ENCODE measurements at regions of chr7 and their contacts with region 1.

Region 1: DNA sequence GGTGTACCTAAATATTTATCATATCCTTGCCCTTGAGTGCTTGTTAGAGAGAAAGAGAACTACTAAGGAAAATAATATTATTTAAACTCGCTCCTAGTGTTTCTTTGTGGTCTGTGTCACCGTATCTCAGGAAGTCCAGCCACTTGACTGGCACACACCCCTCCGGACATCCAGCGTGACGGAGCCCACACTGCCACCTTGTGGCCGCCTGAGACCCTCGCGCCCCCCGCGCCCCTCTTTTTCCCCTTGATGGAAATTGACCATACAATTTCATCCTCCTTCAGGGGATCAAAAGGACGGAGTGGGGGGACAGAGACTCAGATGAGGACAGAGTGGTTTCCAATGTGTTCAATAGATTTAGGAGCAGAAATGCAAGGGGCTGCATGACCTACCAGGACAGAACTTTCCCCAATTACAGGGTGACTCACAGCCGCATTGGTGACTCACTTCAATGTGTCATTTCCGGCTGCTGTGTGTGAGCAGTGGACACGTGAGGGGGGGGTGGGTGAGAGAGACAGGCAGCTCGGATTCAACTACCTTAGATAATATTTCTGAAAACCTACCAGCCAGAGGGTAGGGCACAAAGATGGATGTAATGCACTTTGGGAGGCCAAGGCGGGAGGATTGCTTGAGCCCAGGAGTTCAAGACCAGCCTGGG is 11.4 kb downstream of the SERPINE1 start:
- DNase-seq: peak; percentile 96 to 99 (median 98)
- H3K4me3 ChIP-seq: peak overlapping the region in 2 of 3 experiments; percentile 17 to 44
- H3K4me3 Mint-ChIP-seq: peak overlapping the region; percentile 51 to 83
- H3K27ac ChIP-seq: peak overlapping the region; percentile 71 to 96
- H3K27ac Mint-ChIP-seq: peak overlapping the region; percentile 90 to 97 (median 93)
- H3K4me1 ChIP-seq: peaks cover 28 to 42% of the 10 kb centered on the region in 2 donors
- H3K4me1 Mint-ChIP-seq: peaks cover 52% of the 10 kb centered on the region
- H3K27me3 ChIP-seq: peaks cover 0 to 4% of the 10 kb centered on the region in 2 donors
- H3K27me3 Mint-ChIP-seq: peaks cover 11 to 37% (median 29%) of the 10 kb centered on the region in 3 donors
- CTCF ChIP-seq: peak; percentile 98

Region 2: DNA sequence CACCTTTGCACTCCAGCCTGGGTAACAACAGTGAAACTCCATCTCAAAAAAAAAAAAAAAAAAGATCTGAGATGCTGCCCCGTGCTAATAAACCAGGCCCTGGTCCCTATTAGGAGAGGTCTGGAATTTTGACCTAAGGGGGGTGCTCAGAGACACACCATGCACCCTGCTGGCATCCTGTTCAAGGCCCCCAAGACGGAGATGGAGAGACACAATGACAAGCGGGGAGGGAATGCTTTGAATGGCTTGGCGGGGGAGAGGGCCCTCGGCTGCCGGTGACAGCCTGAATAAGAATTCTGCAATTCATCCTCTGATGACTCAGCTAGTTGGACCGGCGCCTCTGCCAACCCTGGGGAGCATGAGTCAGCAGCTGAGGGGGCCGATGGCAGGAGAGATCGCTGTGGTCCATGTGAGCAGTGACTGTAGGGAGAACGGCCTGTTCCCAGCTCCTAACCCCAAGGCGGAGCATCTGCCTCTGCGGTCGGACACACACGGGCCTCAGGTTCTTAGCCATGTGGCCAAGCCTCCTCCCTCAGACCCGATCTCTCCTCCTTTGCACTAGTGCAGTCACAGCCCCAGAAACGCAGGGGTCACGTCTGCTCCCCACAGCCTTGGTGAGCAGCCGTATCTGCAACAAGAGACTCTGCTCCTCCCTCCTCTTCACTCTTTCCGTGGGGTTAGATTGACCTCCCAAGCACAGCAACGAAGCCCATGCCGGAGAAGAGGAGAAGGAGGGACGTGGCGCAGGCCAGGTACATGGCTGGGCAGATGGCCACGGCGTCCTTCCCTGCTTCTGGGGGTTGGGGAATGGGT is 38.2 kb before region 1 on chr7:
- intact Hi-C with region 1: loop called (anchors 5 kb)
- DNase-seq: peak; percentile 84 to 93 (median 88)
- H3K4me3 ChIP-seq: peak overlapping the region in 1 of 3 experiments; percentile 15
- H3K4me3 Mint-ChIP-seq: peak overlapping the region in 1 of 2 donors; percentile 67
- H3K27ac ChIP-seq: no peak overlapping the region
- H3K27ac Mint-ChIP-seq: peak overlapping the region in 4 of 7 donors; percentile 51 to 70 (median 62)
- H3K4me1 ChIP-seq: peaks cover 12% of the 10 kb centered on the region in 2 donors
- H3K4me1 Mint-ChIP-seq: peaks cover 16% of the 10 kb centered on the region
- H3K27me3 ChIP-seq: peaks cover 2 to 16% of the 10 kb centered on the region in 2 donors
- H3K27me3 Mint-ChIP-seq: peaks cover 14 to 37% (median 18%) of the 10 kb centered on the region in 3 donors
- CTCF ChIP-seq: no peak

Region 3: DNA sequence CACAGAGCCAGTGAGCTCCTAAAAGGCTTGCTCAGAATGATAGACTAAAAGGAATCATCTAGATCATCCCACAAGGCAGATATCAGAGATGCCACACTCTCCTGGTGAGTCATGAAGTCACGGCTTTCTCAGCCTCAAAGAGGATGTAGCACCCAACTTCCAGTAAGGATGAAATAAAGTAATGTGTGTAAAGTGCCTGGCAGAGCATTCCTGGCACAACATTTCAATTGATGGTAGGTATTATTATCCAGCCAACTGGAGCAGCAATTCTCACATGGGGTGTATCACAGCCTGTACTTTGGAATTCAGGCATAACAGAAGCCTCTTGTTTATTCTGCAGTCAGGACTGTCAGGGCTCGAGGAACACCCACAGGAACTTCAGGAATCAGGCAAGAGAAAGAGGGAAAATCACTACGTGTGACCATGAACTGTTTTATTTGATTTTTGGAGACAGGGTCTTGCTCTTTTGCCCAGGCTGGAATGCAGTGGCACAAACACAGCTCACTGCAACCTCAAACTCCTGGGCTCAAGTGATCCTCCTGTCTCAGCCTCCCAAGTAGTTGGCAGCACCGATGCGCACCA is 47.0 kb after region 1 on chr7:
- intact Hi-C with region 1: loop called in 1 of 2 experiments (anchors 5 kb)
- DNase-seq: peak in 1 of 3 donors; percentile 49
- H3K4me3 ChIP-seq: no peak overlapping the region
- H3K4me3 Mint-ChIP-seq: peak overlapping the region in 1 of 2 donors; percentile 44
- H3K27ac ChIP-seq: no peak overlapping the region
- H3K27ac Mint-ChIP-seq: no peak overlapping the region
- H3K4me1 ChIP-seq: peaks cover 12 to 14% of the 10 kb centered on the region in 2 donors
- H3K4me1 Mint-ChIP-seq: peaks cover 17% of the 10 kb centered on the region
- H3K27me3 ChIP-seq: peaks cover 11 to 27% of the 10 kb centered on the region in 2 donors
- H3K27me3 Mint-ChIP-seq: peaks cover 31 to 47% (median 33%) of the 10 kb centered on the region in 3 donors
- CTCF ChIP-seq: no peak

Region 4: GRCh38 chr7:101244375-101245146 is 106.2 kb after region 1 on chr7 and contains the start of gene FIS1:
- intact Hi-C with region 1: loop called in 1 of 2 experiments (anchors 10 kb)
- DNase-seq: peak; percentile 87 to 93 (median 88)
- H3K4me3 ChIP-seq: peak within 1 kb of the TSS; percentile 68 to 97 (median 78)
- H3K4me3 Mint-ChIP-seq: peak within 1 kb of the TSS; percentile 96 to 97
- H3K27ac ChIP-seq: peak within 1 kb of the TSS; percentile 67 to 96
- H3K27ac Mint-ChIP-seq: peak within 1 kb of the TSS; percentile 90 to 98 (median 96)
- H3K4me1 ChIP-seq: peaks cover 37 to 48% of the 10 kb centered on the region in 2 donors
- H3K4me1 Mint-ChIP-seq: peaks cover 39% of the 10 kb centered on the region
- H3K27me3 ChIP-seq: no peaks in the 10 kb centered on the region
- H3K27me3 Mint-ChIP-seq: peaks cover 0 to 2% (median 0%) of the 10 kb centered on the region in 3 donors
- CTCF ChIP-seq: peak; percentile 98
- polyA plus RNA-seq, gene FIS1: 152 to 198 (median 195) TPM

Region 5: DNA sequence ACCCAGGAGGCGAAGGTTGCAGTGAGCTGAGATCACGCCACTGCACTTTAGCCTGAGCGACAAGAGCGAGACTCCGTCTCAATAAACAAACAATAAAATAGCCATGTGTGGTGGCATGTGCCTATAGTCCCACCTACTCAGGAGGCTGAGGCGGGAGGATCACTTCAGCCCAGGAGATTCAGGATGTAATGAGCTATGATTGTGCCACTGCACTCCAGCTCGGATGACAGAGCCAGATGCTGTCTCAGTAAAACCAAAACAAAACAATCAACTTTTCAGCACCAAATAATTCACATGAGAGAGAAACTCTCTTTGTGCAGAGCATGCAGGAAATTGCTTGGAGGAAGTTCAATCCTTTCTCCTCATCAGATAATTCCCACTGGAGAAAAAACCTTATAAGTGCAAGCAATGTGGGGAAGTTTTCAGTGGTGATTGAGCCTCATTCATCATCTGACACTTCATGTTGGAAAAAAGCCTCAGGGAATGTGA is 119.9 kb after region 1 on chr7:
- intact Hi-C with region 1: no loop called
- DNase-seq: no peak
- H3K4me3 ChIP-seq: no peak overlapping the region
- H3K4me3 Mint-ChIP-seq: no peak overlapping the region
- H3K27ac ChIP-seq: no peak overlapping the region
- H3K27ac Mint-ChIP-seq: no peak overlapping the region
- H3K4me1 ChIP-seq: no peaks in the 10 kb centered on the region
- H3K4me1 Mint-ChIP-seq: peaks cover 3% of the 10 kb centered on the region
- H3K27me3 ChIP-seq: no peaks in the 10 kb centered on the region
- H3K27me3 Mint-ChIP-seq: peaks cover 6 to 31% (median 19%) of the 10 kb centered on the region in 3 donors
- CTCF ChIP-seq: no peak

Region 6: DNA sequence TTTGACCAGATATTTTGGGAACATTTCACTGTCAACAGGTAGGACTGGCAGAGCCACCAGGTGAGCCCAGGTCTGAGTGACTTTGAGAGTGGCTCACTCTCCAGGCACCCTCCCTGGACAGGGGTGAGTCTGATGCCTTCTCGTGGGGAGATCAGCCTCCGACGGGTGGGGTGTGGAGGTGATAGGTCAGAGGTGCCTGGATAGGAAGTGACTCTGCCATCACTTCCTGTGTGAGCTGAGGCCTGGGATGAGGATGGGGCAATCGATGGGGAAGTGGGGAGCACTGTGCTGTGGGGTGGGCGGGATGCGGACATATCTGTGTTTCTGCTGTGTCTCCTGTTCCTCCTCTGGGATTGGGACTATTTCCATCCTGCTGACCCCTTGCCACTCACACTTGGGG is 148.7 kb after region 1 on chr7:
- intact Hi-C with region 1: loop called (anchors 10 kb)
- DNase-seq: peak; percentile 35 to 68 (median 56)
- H3K4me3 ChIP-seq: peak overlapping the region in 1 of 3 experiments; percentile 23
- H3K4me3 Mint-ChIP-seq: peak overlapping the region in 1 of 2 donors; percentile 86
- H3K27ac ChIP-seq: no peak overlapping the region
- H3K27ac Mint-ChIP-seq: peak overlapping the region in 3 of 7 donors; percentile 26 to 87 (median 83)
- H3K4me1 ChIP-seq: peaks cover 8 to 9% of the 10 kb centered on the region in 2 donors
- H3K4me1 Mint-ChIP-seq: peaks cover 29% of the 10 kb centered on the region
- H3K27me3 ChIP-seq: peaks cover 0 to 8% of the 10 kb centered on the region in 2 donors
- H3K27me3 Mint-ChIP-seq: peaks cover 13 to 30% (median 16%) of the 10 kb centered on the region in 3 donors
- CTCF ChIP-seq: no peak